ENCODE measurements at regions of chr2 and their contacts with region 1.

Region 1: DNA sequence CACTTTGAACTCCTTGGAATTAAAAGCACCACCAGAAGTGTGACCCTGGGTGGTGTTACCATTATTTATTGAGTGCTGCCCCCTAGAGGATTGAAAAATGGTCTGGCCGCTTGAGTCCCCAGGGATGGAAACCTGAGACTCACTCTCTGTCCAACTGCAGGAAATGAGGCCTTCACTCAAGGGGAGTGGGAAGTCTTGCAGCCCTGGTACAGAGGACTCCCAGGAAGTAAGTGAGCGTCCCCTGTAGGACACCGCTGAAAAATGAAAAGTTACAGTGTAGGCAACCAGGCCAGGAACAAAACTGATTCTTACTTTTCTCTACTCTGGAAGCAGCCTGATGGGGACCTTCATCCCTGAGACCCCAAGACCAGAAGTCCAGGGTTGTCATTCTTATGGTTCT is 2.2 kb upstream of the NRP2 start:
- DNase-seq: peak; percentile 39
- ATAC-seq: peak; percentile 17 to 19

Region 2: DNA sequence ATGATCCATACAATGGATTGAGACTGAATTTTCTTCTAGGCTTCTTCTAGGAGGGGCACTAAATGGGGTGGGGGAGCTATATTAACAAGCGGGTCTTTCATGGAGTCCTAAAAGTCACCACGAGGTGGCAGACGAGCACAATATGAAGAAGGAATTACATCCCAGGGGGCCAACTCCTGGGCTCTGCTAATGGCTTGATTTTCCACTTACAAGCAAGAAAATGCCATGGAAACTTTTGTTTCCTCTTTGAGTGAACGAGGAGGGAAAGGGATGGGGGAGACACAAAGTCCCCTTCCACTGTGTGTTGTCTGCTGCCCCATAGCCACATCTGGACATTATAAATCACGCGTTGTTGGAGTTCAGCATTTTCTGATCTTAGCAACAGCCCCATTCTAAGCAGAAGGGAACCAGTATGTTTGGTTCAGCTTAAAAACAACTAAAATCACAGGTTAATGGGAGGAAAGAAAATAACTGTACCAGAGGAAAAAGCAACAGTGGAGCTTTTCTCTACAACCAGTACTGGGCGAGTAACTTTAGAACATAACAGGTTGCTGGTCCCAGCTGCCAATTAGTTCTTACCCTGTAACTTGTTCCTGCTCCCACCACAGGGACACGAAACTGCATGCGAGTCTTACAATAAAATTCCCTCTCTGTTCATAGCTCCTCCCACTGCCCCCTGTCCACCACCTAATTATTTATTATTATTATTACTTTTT is 1419.7 kb before region 1 on chr2:
- intact Hi-C with region 1: loop called in 1 of 2 experiments (anchors 10 kb)
- DNase-seq: peak; percentile 71
- ATAC-seq: peak; percentile 73 to 74

Region 3: GRCh38 chr2:204325468-204325867 is 1354.6 kb before region 1 on chr2:
- intact Hi-C with region 1: loop called in 1 of 2 experiments (anchors 5 kb)
- DNase-seq: peak; percentile 54
- ATAC-seq: peak; percentile 62 to 69

Region 4: DNA sequence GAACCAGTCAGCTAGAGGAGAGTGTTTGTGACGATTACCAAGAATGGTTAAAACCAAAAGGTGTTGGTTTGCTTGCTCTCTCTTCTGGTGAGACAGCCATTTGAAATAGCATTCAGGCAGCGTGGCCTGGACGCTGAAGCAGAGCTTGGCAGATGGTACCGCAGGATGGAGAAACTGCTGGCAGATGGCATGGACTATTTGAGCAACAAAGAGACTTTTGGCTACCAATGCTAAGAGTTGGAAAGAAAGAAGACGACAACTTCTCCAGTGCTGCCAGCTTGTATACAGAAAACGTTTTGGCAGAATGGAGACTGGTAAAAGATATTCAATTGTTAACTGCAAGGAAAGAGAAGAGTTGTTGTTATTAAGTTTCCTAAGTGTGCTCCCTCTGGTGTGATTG is 819.8 kb before region 1 on chr2:
- intact Hi-C with region 1: loop called in 1 of 2 experiments (anchors 10 kb)
- DNase-seq: peak; percentile 36
- ATAC-seq: peak in 1 of 2 donors; percentile 73

Region 5: DNA sequence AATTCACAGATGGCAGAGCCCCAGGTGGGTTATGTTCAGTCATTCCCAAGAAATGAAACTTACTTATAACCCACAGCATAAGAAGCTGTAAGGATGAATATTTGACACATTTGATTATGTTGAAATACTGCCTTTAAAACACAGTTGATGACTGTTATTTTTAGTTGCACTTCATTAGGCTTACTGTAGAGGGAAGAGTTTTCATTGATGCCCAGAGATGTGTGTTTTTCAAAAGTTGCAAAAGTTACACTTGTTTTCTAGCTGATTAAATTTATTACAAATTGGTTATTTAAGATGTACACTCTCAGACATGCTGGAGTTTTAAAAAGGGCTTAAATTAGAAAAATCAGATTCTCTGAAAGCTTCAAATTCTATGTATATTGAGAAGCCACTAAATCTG is 628.6 kb before region 1 on chr2:
- intact Hi-C with region 1: loop called in 1 of 2 experiments (anchors 10 kb)
- DNase-seq: no peak
- ATAC-seq: no peak

Region 6: GRCh38 chr2:205617905-205618304 is 62.2 kb before region 1 on chr2:
- intact Hi-C with region 1: no loop called
- DNase-seq: no peak
- ATAC-seq: no peak